IMR-90 (cell line): ENCODE measurements at regions of chr3 and their contacts with region 1.

Region 1: GRCh38 chr3:29240248-29240647 is 40.6 kb upstream of the RBMS3 start:
- DNase-seq: peak; percentile 66
- ATAC-seq: peak; percentile 73
- H3K4me3 ChIP-seq: no peak overlapping the region
- H3K27ac ChIP-seq: peak overlapping the region; percentile 32; the same call in 1 of the 2 replicates
- H3K4me1 ChIP-seq: peaks cover 3% of the 10 kb centered on the region
- H3K27me3 ChIP-seq: no peaks in the 10 kb centered on the region
- CTCF ChIP-seq: no peak
- POLR2A ChIP-seq: no peak
- RAD21 ChIP-seq: no peak

Region 2: GRCh38 chr3:28924744-28925360 is 315.4 kb before region 1 on chr3:
- CTCF ChIA-PET with region 1: no interaction called
- POLR2A ChIA-PET with region 1: interaction called, 31 read pairs
- dilution Hi-C with region 1: no loop called
- in situ Hi-C with region 1: no loop called
- intact Hi-C with region 1: no loop called
- DNase-seq: no peak
- ATAC-seq: no peak
- H3K4me3 ChIP-seq: no peak overlapping the region
- H3K27ac ChIP-seq: no peak overlapping the region
- H3K4me1 ChIP-seq: no peaks in the 10 kb centered on the region
- H3K27me3 ChIP-seq: no peaks in the 10 kb centered on the region
- CTCF ChIP-seq: no peak
- POLR2A ChIP-seq: no peak
- RAD21 ChIP-seq: no peak

Region 3: DNA sequence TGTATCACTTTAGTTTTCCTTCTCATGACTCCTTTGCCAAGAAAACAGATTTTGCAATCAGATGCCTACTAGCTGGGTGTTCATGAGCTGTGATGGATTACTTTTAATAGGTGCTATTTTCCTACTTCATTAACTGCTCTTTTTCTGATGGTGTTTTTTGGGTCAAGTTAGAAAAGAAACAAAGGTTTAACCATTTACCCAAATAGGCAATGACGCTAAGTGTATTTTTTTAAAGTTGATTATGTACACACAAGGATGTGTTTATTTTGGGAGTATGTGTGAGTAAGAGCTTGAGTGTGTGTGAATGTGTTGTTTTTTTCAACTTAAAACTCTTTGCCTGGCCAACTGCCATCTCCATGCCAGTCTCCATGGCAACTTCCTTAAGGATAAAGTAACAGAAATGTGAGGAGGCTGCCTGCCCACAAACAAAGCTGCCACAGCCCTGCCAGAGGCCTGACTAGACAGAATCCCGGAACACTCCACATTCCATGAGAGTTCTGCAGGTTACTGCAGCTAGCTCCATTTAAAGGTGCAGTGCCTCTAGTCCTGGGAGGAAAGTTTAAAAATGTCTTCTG is 174.9 kb before region 1 on chr3:
- CTCF ChIA-PET with region 1: no interaction called
- POLR2A ChIA-PET with region 1: no interaction called
- dilution Hi-C with region 1: no loop called
- in situ Hi-C with region 1: no loop called
- intact Hi-C with region 1: loop called (anchors 10 kb)
- DNase-seq: peak; percentile 99
- ATAC-seq: peak; percentile 98
- H3K4me3 ChIP-seq: no peak overlapping the region
- H3K27ac ChIP-seq: no peak overlapping the region
- H3K4me1 ChIP-seq: 0 out of 2 replicates have a peak, but pooled peaks cover 4% of the 10 kb centered on the region
- H3K27me3 ChIP-seq: no peaks in the 10 kb centered on the region
- CTCF ChIP-seq: no peak
- POLR2A ChIP-seq: no peak
- RAD21 ChIP-seq: peak; percentile 27

Region 4: GRCh38 chr3:30964612-30965011 is 1724.4 kb after region 1 on chr3:
- CTCF ChIA-PET with region 1: no interaction called
- POLR2A ChIA-PET with region 1: no interaction called
- dilution Hi-C with region 1: no loop called
- in situ Hi-C with region 1: no loop called
- intact Hi-C with region 1: no loop called
- DNase-seq: no peak
- ATAC-seq: no peak
- H3K4me3 ChIP-seq: no peak overlapping the region
- H3K27ac ChIP-seq: no peak overlapping the region
- H3K4me1 ChIP-seq: no peaks in the 10 kb centered on the region
- H3K27me3 ChIP-seq: peaks cover 3% of the 10 kb centered on the region; the same call in 1 of the 2 replicates
- CTCF ChIP-seq: no peak
- POLR2A ChIP-seq: no peak
- RAD21 ChIP-seq: no peak